GM18951 (cell line): ENCODE measurements at regions of chr14 and their contacts with region 1.

Region 1: DNA sequence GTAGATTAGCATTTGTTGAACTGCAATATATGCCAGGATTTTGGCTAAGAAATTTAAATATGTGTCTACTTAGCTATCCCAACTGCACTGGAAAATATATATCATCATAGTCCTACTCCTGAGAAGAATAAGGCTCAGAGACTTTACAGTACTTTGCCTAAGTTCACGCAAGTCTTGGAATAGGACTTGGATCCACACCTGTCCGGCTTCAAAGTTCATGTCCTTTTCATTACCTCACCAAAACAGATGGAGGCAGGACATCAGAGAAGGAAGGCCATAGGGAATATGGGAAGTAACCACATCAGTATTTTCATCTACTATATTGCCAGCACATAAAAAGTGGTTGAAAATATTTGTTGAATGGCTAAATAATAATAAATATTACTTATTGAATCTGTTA is 358.5 kb downstream of the PRKD1 start:
- POLR2A ChIP-seq: no peak

Region 2: GRCh38 chr14:28130610-28131284 is 1438.4 kb before region 1 on chr14:
- in situ Hi-C with region 1: loop called (anchors 10 kb)
- POLR2A ChIP-seq: no peak

Region 3: GRCh38 chr14:29102996-29103395 is 466.2 kb before region 1 on chr14:
- in situ Hi-C with region 1: no loop called
- POLR2A ChIP-seq: no peak